HEK293 (cell line): ENCODE measurements at regions of chr19 and their contacts with region 1.

Region 1: GRCh38 chr19:4933528-4933927 is 24.2 kb downstream of the UHRF1 start:
- H3K4me3 ChIP-seq: no peak overlapping the region
- H3K27ac ChIP-seq: no peak overlapping the region
- H3K4me1 ChIP-seq: no peaks in the 10 kb centered on the region
- CTCF ChIP-seq: no peak

Region 2: DNA sequence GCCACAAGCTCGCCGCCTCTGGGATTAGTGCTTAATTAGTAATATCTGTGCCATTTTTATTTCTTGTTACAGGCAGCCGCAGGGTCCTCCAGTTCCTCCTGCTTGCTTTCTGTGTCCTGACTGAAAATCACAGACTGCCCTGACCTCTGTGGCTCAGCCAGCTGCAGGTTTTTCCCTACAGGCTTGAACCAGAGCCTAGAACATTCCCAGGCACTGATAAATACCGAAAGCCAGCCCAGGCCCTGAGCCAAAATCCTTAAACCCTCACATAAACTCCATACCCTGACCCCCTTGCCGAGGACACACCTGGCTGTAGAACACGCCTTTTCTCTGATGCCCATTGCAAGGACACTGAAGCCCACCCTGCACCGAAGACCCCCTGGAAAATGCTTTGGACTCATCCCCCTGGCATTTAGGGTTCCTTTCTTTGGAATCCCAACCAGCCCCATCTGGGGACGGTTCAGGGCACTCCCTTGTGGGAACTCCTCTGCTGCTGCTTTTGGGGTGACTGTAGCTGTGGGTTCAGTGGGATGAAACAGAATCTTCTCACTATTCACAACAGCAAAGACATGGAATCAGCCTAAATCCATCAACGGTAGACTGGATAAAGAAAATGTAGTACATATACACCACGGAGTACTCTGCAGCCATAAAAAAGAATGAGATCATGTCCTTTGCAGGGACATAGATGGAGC is 225.4 kb before region 1 on chr19:
- CTCF ChIA-PET with region 1: no interaction called
- POLR2A ChIA-PET with region 1: interaction called, 10 read pairs
- H3K4me3 ChIP-seq: no peak overlapping the region
- H3K27ac ChIP-seq: no peak overlapping the region
- H3K4me1 ChIP-seq: no peaks in the 10 kb centered on the region
- CTCF ChIP-seq: no peak

Region 3: GRCh38 chr19:4841366-4841704 is 92.2 kb before region 1 on chr19:
- CTCF ChIA-PET with region 1: no interaction called
- POLR2A ChIA-PET with region 1: no interaction called
- H3K4me3 ChIP-seq: no peak overlapping the region
- H3K27ac ChIP-seq: no peak overlapping the region
- H3K4me1 ChIP-seq: no peaks in the 10 kb centered on the region
- CTCF ChIP-seq: no peak

Region 4: DNA sequence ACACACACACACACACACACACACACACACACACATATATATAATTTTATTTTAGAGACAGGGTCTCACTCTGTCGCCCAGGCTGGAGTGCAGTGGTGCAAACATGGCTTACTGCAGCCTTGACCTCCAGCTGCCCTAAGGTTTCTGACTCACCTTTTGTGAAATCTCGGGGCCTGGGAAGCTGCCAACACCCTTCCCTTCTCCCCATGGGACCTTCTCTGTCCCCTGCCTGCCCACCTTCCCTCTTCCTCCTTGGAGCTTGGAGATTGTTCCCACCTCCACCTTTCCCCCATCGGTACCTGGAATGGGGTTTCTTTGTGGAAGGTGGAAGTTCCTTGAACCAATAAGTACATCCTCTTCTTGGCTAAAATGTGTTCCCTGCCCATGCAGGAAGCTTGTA is 37.2 kb before region 1 on chr19:
- CTCF ChIA-PET with region 1: no interaction called
- POLR2A ChIA-PET with region 1: no interaction called
- H3K4me3 ChIP-seq: no peak overlapping the region
- H3K27ac ChIP-seq: no peak overlapping the region
- H3K4me1 ChIP-seq: no peaks in the 10 kb centered on the region
- CTCF ChIP-seq: no peak

Region 5: GRCh38 chr19:4909897-4910593 is 23.5 kb before region 1 on chr19:
- CTCF ChIA-PET with region 1: interaction called, 10 read pairs
- POLR2A ChIA-PET with region 1: no interaction called
- H3K4me3 ChIP-seq: peak overlapping the region; percentile 77
- H3K27ac ChIP-seq: peak overlapping the region; percentile 92
- H3K4me1 ChIP-seq: peaks cover 13% of the 10 kb centered on the region
- CTCF ChIP-seq: no peak